Activated naive CD8-positive, alpha-beta T cell treated with anti-CD3 and anti-CD28 coated beads, Interleukin-2, amount 10 ng/mL, durations not matched to agents 7 days and 5 days (primary cell): ENCODE measurements at regions of chr13 and their contacts with region 1.

Region 1: DNA sequence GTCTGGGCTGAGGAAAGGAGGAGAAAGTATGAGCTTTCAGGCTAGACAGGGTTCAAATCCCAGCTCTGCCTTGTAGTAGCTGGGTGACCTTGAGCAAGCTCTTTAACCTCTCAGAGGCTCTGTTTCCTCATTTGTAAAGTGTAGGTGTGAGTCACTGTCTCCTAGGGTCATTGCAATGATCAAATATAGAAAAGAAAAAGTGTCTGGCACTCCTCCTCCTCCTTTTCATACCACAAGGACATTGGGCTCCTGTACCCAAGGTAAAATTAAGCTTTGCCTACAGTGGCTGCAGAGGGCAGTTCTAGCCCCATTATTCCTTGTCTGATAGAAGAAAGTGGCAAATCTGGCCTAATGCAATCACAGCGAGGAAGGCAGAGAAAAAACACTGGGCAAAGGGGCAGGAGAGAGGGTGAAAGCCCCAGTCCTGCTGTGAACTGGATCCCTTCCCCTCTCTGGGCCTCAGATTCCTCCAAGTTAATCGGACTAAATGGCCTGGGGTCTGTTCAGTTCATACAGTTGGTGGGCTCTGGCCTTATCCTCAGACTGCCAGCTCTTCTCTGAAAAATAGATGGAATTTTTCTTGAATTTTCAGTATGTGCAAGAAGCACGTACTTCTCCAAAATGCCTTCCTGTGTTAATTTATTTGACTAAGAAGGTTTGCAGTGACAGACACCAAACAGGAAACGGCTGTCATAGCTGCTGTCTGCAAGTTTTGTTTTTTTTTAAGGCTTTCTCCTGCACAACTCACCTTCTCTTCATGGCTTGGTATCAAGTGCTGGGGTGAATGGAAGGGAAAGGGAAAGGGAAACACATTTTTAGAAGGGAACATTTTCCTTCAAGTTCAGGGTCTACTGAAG is 35.3 kb downstream of the RGCC start:
- DNase-seq: no peak
- ATAC-seq: peak; percentile 67
- H3K4me3 Mint-ChIP-seq: peak overlapping the region; percentile 69
- H3K27ac Mint-ChIP-seq: peak overlapping the region; percentile 93
- H3K4me1 Mint-ChIP-seq: peaks cover 49% of the 10 kb centered on the region
- H3K27me3 Mint-ChIP-seq: no peaks in the 10 kb centered on the region

Region 2: DNA sequence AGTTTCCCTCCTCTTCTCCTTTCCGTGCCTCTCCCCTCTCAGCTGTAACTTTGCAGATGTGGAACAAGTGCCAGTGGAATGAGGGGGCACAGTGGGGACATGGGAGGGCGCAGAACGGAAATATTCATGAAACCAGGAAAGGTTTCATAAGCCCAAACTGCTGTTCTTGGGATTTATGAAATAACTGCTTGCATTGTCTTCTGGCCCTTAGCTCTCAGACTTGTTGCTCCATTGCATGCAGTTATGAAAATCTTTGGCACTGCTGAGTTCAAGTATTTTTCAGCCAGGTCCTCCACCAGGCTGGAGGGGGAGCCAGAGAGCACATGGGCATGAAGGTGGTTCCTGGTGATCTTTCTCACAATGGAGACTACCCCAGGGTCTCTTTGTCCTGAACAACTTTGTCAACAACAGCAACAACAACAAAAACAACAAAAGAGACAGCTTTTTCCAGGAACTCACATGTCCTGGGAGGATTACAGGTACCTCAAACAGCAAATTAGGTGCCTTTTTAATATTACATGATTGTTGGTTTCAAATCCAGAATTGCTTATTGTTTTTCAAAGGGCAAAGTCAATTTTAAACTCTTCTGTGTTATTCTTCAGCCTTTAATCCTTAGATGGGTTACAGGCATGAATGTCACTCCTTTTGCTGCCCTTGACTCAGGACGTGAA is 33.7 kb before region 1 on chr13:
- POLR2A ChIA-PET with region 1: interaction called, 25 read pairs
- DNase-seq: peak; percentile 70
- ATAC-seq: peak; percentile 15
- H3K4me3 Mint-ChIP-seq: peak overlapping the region; percentile 89
- H3K27ac Mint-ChIP-seq: peak overlapping the region; percentile 88
- H3K4me1 Mint-ChIP-seq: peaks cover 54% of the 10 kb centered on the region
- H3K27me3 Mint-ChIP-seq: peaks cover 19% of the 10 kb centered on the region

Region 3: GRCh38 chr13:41465241-41465847 is 27.3 kb before region 1 on chr13:
- POLR2A ChIA-PET with region 1: interaction called, 25 read pairs
- DNase-seq: peak; percentile 83
- ATAC-seq: peak; percentile 92
- H3K4me3 Mint-ChIP-seq: peak overlapping the region; percentile 58
- H3K27ac Mint-ChIP-seq: peak overlapping the region; percentile 93
- H3K4me1 Mint-ChIP-seq: peaks cover 67% of the 10 kb centered on the region
- H3K27me3 Mint-ChIP-seq: no peaks in the 10 kb centered on the region